GM12878 (cell line): ENCODE measurements at regions of chr10 and their contacts with region 1.

Region 1: GRCh38 chr10:101782811-101783735 is at the start of gene NPM3:
- DNase-seq: no peak
- ATAC-seq: peak; percentile 76
- H3K4me3 ChIP-seq: peak within 1 kb of the TSS; percentile 85
- H3K27ac ChIP-seq: peak within 1 kb of the TSS; percentile 71
- H3K4me1 ChIP-seq: peaks cover 41% of the 10 kb centered on the region
- H3K27me3 ChIP-seq: no peaks in the 10 kb centered on the region
- CTCF ChIP-seq: no peak
- EP300 ChIP-seq: no peak
- POLR2A ChIP-seq: peak; percentile 76
- RAD21 ChIP-seq: no peak
- polyA plus RNA-seq, gene NPM3: 19.7 to 49.6 TPM

Region 2: DNA sequence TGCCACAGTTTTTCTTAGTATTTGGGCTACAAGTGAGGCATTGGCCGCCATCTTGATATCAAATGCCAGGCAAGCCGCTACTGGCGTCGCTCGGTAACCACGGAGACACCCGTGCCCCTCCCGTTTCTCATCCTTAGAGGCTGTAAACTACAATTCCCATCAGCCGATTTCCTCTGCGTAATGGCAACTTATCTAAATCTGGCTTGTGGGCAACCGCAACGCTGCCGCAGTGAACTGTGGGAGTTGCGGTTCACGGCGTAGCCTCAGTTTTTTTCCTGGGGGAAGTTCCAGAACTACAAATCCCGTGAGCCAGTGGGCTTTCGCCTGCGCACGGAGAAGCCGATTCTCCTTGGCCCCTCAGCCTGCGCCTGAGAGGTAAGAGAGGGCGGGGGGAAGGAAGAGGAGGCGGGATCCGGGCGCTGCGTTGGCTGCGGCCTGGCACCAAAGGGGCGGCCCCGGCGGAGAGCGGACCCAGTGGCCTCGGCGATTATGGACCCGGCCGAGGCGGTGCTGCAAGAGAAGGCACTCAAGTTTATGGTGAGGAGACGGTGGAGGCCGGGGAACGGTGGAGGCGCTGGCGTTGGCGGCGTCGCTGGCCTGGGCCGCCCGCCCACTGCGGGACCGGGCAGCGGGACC is 429.3 kb before region 1 on chr10 and contains the start of gene BTRC:
- CTCF ChIA-PET with region 1: no interaction called
- POLR2A ChIA-PET with region 1: no interaction called
- RAD21 ChIA-PET with region 1: no interaction called
- SMC1A ChIA-PET with region 1: interaction called, 3 read pairs
- in situ Hi-C with region 1: no loop called
- intact Hi-C with region 1: loop called (anchors 10 kb)
- DNase-seq: peak; percentile 98
- ATAC-seq: peak; percentile 98
- H3K4me3 ChIP-seq: peak within 1 kb of the TSS; percentile 82
- H3K27ac ChIP-seq: peak within 1 kb of the TSS; percentile 51
- H3K4me1 ChIP-seq: 0 out of 2 replicates have a peak, but pooled peaks cover 3% of the 10 kb centered on the region
- H3K27me3 ChIP-seq: no peaks in the 10 kb centered on the region
- CTCF ChIP-seq: no peak
- EP300 ChIP-seq: peak in 1 of 2 experiments; percentile 93; a peak in 2 of 4 replicates
- POLR2A ChIP-seq: peak; percentile 79
- RAD21 ChIP-seq: no peak
- polyA plus RNA-seq, gene BTRC: 2.2 to 3.2 TPM

Region 3: GRCh38 chr10:101587725-101588653 is 195.1 kb before region 1 on chr10 and contains the starts of genes DPCD and POLL:
- CTCF ChIA-PET with region 1: interaction called, 14 read pairs
- POLR2A ChIA-PET with region 1: no interaction called
- RAD21 ChIA-PET with region 1: interaction called, 9 read pairs
- SMC1A ChIA-PET with region 1: interaction called, 5 read pairs
- in situ Hi-C with region 1: no loop called
- intact Hi-C with region 1: no loop called
- DNase-seq: peak; percentile 71
- ATAC-seq: peak; percentile 99
- H3K4me3 ChIP-seq: peak within 1 kb of the TSS; percentile 79
- H3K27ac ChIP-seq: peak within 1 kb of the TSS; percentile 76
- H3K4me1 ChIP-seq: peaks cover 4% of the 10 kb centered on the region; the same call in 1 of the 2 replicates
- H3K27me3 ChIP-seq: no peaks in the 10 kb centered on the region
- CTCF ChIP-seq: no peak
- EP300 ChIP-seq: 0 out of 4 replicates have a peak, but pooled peaks of 1 of the 2 experiments have one; percentile 12
- POLR2A ChIP-seq: peak; percentile 70
- RAD21 ChIP-seq: no peak
- polyA plus RNA-seq, gene DPCD: 39.9 to 50.9 TPM
- polyA plus RNA-seq, gene POLL: 1.5 to 2.1 TPM

Region 4: DNA sequence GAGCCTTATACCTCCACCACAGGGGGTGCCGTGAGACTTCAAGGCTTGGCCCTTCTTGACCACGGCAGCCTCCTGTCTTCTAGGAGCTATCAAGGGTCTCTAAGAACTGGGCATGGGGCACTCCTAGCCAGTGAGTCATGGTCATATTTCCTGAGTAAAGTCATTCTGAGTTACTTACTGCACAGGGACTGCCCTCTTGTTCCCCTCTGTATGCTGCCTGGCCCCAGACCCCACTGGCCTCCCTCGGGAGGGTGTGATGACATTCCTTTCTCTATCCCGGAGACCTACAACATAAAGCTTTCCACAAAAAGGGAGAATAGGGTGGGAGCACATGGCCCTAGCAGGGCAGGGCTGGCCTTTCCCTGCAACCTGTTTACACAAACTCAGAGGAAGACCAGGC is 173.6 kb before region 1 on chr10:
- CTCF ChIA-PET with region 1: interaction called, 334 read pairs
- POLR2A ChIA-PET with region 1: interaction called, 6 read pairs
- RAD21 ChIA-PET with region 1: interaction called, 172 read pairs
- SMC1A ChIA-PET with region 1: interaction called, 139 read pairs
- in situ Hi-C with region 1: loop called (anchors 5 kb)
- intact Hi-C with region 1: no loop called
- DNase-seq: no peak
- ATAC-seq: no peak
- H3K4me3 ChIP-seq: no peak overlapping the region
- H3K27ac ChIP-seq: no peak overlapping the region
- H3K4me1 ChIP-seq: no peaks in the 10 kb centered on the region
- H3K27me3 ChIP-seq: no peaks in the 10 kb centered on the region
- CTCF ChIP-seq: no peak
- EP300 ChIP-seq: no peak
- POLR2A ChIP-seq: no peak
- RAD21 ChIP-seq: no peak

Region 5: DNA sequence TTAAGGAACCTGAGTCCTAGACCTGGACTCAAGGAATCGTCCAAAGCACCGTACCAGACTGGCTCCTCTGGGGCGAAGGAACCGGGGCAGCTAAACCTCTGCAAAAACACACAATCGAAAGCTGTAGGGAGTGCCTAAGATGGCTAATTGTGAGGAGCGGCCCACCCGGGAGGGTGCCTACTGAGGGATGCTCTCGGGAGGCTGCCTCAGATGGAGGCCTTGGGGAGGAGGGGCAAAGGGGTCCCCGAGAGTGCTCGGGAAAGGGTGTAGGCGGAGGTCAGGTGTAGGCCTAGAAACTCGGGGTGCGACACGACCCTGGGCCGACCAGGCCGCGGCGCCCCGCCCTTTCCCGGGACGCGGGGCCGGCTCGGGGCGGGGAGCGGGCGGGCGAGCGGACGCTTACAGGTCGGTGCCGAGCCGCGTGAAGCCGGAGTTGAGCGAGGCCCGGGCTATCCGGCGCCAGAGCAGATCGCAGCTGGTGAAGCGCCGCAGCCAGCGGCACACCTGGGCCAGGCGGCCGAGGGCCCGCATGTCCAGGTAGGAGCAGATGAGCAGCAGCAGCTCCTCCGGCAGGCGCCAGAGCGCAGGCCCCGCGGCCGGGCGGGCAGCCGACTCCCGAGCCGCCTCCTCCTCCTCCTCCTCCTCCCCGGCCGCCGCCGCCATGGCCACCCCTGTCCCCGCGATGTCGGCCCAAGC is 88.9 kb before region 1 on chr10:
- CTCF ChIA-PET with region 1: interaction called, 8 read pairs
- POLR2A ChIA-PET with region 1: interaction called, 3 read pairs
- RAD21 ChIA-PET with region 1: interaction called, 6 read pairs
- SMC1A ChIA-PET with region 1: no interaction called
- in situ Hi-C with region 1: no loop called
- intact Hi-C with region 1: loop called (anchors 5 kb)
- DNase-seq: no peak
- ATAC-seq: peak; percentile 86
- H3K4me3 ChIP-seq: peak overlapping the region; percentile 98
- H3K27ac ChIP-seq: peak overlapping the region; percentile 91
- H3K4me1 ChIP-seq: peaks cover 13% of the 10 kb centered on the region
- H3K27me3 ChIP-seq: no peaks in the 10 kb centered on the region
- CTCF ChIP-seq: no peak
- EP300 ChIP-seq: no peak
- POLR2A ChIP-seq: peak; percentile 54
- RAD21 ChIP-seq: no peak

Region 6: DNA sequence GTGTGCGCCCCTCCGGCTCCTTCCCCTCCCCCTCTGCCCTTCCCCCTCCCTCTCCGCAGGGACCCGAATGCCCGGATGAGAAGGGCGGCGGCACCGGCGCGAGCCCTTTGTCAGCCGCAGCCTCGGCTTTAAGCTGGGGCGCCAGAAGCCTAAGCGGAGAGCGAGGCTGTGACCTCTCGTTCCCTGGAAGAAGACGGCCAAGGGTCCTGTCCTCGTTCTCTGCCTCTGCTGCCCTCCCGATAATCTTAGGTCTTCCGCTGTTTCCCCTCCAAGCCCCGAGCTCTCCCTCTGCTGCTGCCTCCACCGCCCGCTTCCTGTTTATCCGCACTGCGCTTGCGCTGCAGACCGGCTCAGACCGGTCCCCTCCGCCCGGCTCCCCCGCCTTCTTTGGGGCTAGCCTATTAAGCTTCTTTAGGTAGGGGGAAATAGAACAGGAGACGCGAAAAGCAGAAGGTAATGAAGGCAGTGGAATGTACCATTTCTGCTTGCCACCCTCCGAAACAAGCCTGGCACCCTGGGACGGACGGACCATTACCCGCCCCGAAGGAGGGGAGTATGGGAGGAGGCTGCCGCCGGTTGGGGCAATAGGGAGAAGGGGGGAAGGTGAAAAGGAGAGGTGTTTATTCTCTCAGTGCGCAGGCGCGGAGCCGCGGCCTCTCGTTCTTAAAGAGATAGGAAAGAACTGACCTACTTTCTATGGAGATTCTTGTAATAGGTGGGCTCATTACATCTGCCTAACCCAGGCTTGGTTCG is 35.2 kb after region 1 on chr10 and contains the start of gene OGA:
- CTCF ChIA-PET with region 1: interaction called, 15 read pairs
- POLR2A ChIA-PET with region 1: interaction called, 12 read pairs
- RAD21 ChIA-PET with region 1: interaction called, 3 read pairs
- SMC1A ChIA-PET with region 1: interaction called, 6 read pairs
- in situ Hi-C with region 1: no loop called
- intact Hi-C with region 1: no loop called
- DNase-seq: peak; percentile 100
- ATAC-seq: peak; percentile 91
- H3K4me3 ChIP-seq: peak within 1 kb of the TSS; percentile 81
- H3K27ac ChIP-seq: peak within 1 kb of the TSS; percentile 95
- H3K4me1 ChIP-seq: peaks cover 11% of the 10 kb centered on the region; the same call in 1 of the 2 replicates
- H3K27me3 ChIP-seq: no peaks in the 10 kb centered on the region
- CTCF ChIP-seq: no peak
- EP300 ChIP-seq: peak; percentile 58 to 73; a peak in 2 of 4 replicates
- POLR2A ChIP-seq: peak; percentile 92
- RAD21 ChIP-seq: no peak
- polyA plus RNA-seq, gene OGA: 23.0 to 28.3 TPM

Region 7: DNA sequence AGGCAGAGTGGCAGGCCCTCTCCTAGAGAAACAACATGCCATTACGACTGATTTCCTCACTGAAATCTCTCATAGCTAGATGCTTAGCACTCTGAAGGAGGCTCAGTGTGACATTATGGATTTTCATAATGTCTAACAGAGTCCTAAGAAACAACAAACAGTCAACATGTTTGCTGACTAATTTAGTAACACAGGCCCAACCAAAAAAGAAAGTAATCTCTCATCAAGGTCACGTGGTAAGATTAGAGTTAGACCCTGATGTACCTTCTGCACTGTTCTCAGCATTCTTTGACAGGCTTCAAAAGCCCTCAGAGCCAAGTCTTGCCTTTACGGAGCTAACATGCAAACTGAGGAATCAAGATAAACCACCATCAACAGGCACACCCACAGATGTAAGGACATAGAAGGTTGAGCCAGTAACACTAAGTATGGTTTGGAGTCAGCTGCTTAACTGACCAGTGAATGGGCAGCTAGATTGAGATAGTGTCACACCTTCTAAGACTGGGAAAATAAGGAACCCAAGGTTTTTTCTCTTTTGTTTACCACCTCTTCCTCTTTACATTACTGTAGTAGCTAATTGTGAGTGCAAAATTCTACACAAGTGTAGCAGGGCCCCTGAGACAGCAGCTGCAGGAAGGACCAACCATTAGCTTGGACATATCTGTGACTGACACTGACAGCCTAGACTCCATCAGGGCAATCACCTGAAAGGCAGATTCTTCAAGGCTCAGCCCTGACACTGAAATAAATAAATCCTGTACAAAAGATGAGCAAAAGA is 75.8 kb after region 1 on chr10:
- CTCF ChIA-PET with region 1: no interaction called
- POLR2A ChIA-PET with region 1: no interaction called
- RAD21 ChIA-PET with region 1: no interaction called
- SMC1A ChIA-PET with region 1: no interaction called
- in situ Hi-C with region 1: no loop called
- intact Hi-C with region 1: no loop called
- DNase-seq: peak; percentile 61
- ATAC-seq: peak; percentile 91
- H3K4me3 ChIP-seq: peak overlapping the region; percentile 28; the same call in 1 of the 2 replicates
- H3K27ac ChIP-seq: peak overlapping the region; percentile 83
- H3K4me1 ChIP-seq: peaks cover 32% of the 10 kb centered on the region
- H3K27me3 ChIP-seq: no peaks in the 10 kb centered on the region
- CTCF ChIP-seq: no peak
- EP300 ChIP-seq: peak in 1 of 2 experiments; percentile 37; a peak in 1 of 4 replicates
- POLR2A ChIP-seq: peak; percentile 45; the same call in 1 of the 2 replicates
- RAD21 ChIP-seq: no peak

Region 8: GRCh38 chr10:102132563-102133372 is 349.7 kb after region 1 on chr10 and contains the start of gene PPRC1:
- CTCF ChIA-PET with region 1: no interaction called
- POLR2A ChIA-PET with region 1: no interaction called
- RAD21 ChIA-PET with region 1: no interaction called
- SMC1A ChIA-PET with region 1: no interaction called
- in situ Hi-C with region 1: no loop called
- intact Hi-C with region 1: no loop called
- DNase-seq: peak; percentile 97
- ATAC-seq: peak; percentile 95
- H3K4me3 ChIP-seq: peak within 1 kb of the TSS; percentile 93
- H3K27ac ChIP-seq: peak within 1 kb of the TSS; percentile 75
- H3K4me1 ChIP-seq: peaks cover 10% of the 10 kb centered on the region
- H3K27me3 ChIP-seq: no peaks in the 10 kb centered on the region
- CTCF ChIP-seq: peak; percentile 87 to 98 (median 88)
- EP300 ChIP-seq: 0 out of 4 replicates have a peak, but pooled peaks of 1 of the 2 experiments have one; percentile 18
- POLR2A ChIP-seq: peak; percentile 91
- RAD21 ChIP-seq: peak; percentile 69
- polyA plus RNA-seq, gene PPRC1: 13.1 to 15.2 TPM